ENCODE measurements at regions of chr1 and their contacts with region 1.

Region 1: DNA sequence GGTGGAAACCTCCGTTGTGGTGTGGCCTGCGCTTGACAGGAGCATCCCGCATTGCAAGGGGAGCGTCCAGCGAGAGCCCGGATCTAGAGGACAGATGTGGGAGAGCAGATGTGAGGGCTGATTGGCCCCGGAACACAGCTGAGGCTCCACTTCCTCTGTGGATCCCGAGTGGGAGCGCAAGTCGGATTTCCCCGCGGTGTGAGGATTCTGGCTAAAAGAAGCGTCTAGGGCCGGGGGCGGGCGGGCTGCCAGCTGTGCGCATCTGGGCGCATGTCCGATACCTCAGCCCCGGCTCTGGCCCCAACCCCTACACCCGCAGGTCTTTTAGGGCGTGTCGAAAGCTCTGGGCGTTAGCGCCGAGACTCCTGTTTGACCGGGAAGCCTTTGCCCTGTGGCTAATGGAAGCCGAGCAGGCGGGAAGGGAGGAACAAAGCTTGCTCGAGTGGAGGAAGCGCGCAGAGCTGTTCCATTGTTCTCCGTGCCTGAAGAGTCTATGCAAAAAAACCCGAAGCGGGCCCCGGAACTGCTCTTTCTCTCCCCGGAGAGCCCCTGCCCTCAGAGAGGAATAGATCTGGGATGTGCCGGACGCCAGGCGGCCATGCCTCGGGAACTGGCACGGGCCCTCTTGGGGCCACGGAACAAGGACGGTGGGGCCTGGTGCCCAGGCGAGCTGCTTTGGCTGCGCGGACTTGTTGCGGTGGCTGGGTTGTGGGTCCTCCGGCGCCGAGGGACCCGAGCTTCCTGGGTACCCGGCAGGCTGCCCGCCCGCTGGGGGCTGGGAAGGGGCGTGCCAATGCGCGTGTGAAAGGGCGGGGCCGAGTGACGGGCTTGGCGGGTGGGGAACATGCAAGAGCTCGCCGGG is 111.1 kb downstream of the NAV1 start:
- DNase-seq: peak; percentile 97
- H3K4me3 ChIP-seq: peak overlapping the region; percentile 70
- H3K27ac ChIP-seq: peak overlapping the region; percentile 87
- H3K4me1 ChIP-seq: peaks cover 12% of the 10 kb centered on the region
- H3K27me3 ChIP-seq: peaks cover 11% of the 10 kb centered on the region
- CTCF ChIP-seq: no peak

Region 2: GRCh38 chr1:201582705-201583442 is 67.1 kb before region 1 on chr1:
- intact Hi-C with region 1: no loop called
- DNase-seq: no peak
- H3K4me3 ChIP-seq: no peak overlapping the region
- H3K27ac ChIP-seq: no peak overlapping the region
- H3K4me1 ChIP-seq: no peaks in the 10 kb centered on the region
- H3K27me3 ChIP-seq: no peaks in the 10 kb centered on the region
- CTCF ChIP-seq: no peak

Region 3: DNA sequence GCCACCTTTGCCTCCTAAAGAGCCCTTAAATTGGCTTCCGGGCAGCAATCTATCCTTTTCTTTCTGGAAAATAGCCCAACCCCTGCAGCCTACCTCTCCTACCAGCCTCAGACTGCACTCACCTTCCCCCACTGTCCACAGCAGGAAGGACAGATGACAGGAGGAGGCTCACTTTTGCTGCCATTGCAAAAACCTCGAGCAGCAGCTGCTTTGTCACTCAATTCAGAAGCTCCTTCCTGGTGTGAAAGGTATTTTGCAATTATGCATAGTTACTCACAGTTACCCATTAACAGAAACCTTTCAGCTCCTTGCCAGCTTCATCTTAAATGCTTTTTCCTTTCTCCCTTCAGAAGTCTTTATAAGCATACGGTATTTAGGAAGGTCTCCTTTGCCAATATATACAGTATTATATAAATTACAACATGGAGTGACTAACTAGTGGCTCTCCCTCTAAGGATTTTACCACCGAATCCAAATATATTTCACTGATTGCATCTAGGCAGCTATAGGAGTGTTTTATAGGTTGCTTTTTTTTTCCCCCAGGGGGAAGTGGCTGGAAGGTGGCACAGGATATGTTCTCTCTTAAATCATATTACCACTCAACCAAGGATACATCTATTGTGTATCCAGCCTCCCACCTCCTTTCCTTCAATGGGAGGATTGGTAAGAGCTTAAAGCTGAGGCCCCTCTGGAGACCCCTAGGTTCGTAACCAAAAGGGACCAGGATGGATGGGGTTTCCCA is 36.9 kb after region 1 on chr1:
- intact Hi-C with region 1: loop called (anchors 5 kb)
- DNase-seq: peak; percentile 66
- H3K4me3 ChIP-seq: no peak overlapping the region
- H3K27ac ChIP-seq: peak overlapping the region; percentile 9
- H3K4me1 ChIP-seq: no peaks in the 10 kb centered on the region
- H3K27me3 ChIP-seq: no peaks in the 10 kb centered on the region
- CTCF ChIP-seq: no peak

Measured in colonic mucosa (tissue), 4 donors.